Cardiac septum (tissue), 1 donor: ENCODE measurements at regions of chr15 and their contacts with region 1.

Region 1: GRCh38 chr15:42548253-42549031 is at the starts of genes HAUS2 and LRRC57:
- DNase-seq: peak; percentile 95
- total RNA-seq, gene HAUS2: 14.7 TPM
- total RNA-seq, gene LRRC57: 16.9 TPM

Region 2: DNA sequence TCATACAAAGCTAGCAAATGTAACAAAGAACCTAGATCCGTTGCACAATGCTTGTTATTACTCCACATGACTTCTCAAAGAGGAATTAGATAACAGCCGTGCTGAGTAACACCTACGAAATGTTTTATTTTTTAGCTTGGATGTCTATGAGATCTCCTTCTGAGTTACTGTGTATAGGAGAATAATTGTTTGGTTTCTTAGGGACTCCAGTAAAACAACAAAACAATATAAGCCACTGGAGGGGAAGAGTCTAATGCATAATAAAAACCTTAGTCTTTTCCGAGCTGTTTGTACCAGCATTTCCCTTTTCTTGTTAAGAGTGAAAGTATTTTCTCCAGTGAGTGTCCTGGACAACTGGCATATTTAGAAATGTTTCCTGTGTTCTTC is 37.4 kb before region 1 on chr15:
- intact Hi-C with region 1: loop called (anchors 5 kb)
- DNase-seq: no peak

Region 3: DNA sequence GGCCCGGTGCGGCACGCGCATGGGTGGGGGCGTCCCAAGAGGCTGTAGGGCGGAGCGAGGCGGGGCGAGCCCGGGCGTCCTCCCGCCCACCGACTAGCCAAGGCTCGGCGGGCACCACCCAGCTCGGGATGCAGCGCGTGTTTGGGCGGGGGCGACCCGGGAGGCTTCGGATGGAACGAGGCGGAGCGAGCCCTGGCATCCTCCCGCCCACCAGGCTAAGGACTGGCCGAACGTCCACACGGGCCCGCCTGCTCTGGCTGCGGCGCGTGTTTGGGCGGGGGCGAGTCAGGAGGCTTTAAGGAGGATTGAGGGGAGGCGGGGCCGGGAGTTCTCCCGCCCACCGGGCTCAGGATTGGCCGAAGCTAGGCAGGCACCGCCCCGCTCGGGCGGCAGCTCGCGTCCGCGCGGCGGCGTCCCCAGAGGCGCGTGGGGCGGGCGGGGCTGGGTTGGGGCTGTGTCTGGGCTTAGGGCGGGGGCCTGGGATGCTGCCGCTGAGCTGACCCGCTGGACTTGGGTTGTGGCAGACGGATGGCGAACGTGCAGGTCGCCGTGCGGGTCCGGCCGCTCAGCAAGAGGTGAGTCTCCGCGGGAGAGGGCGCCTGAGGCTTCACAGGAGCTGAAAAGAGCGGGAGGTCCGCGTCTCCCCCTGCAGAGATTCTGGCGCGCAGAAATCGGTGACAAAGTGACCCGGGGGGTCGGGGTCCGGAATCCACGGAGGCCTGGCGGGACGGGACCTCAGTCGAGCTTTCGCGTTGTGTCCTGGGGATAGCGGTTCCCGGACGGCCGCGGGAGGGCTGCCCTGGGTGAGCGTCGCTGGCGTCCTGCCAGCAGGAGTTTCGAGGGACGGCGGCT is 27.0 kb after region 1 on chr15 and contains the start of gene STARD9:
- intact Hi-C with region 1: loop called (anchors 2 kb)
- DNase-seq: peak; percentile 99
- total RNA-seq, gene STARD9: 9.2 TPM

Region 4: GRCh38 chr15:42650208-42651066 is 102.0 kb after region 1 on chr15:
- intact Hi-C with region 1: loop called (anchors 5 kb)
- DNase-seq: no peak